ENCODE measurements at regions of chr16 and their contacts with region 1.

Region 1: GRCh38 chr16:48353565-48354163 is 31.5 kb downstream of the SIAH1 start:
- DNase-seq: peak; percentile 75
- ATAC-seq: peak; percentile 84
- H3K4me3 ChIP-seq: no peak overlapping the region
- H3K27ac ChIP-seq: no peak overlapping the region
- H3K4me1 ChIP-seq: no peaks in the 10 kb centered on the region
- H3K27me3 ChIP-seq: no peaks in the 10 kb centered on the region
- CTCF ChIP-seq: peak; percentile 97
- POLR2A ChIP-seq: no peak
- RAD21 ChIP-seq: peak; percentile 87

Region 2: DNA sequence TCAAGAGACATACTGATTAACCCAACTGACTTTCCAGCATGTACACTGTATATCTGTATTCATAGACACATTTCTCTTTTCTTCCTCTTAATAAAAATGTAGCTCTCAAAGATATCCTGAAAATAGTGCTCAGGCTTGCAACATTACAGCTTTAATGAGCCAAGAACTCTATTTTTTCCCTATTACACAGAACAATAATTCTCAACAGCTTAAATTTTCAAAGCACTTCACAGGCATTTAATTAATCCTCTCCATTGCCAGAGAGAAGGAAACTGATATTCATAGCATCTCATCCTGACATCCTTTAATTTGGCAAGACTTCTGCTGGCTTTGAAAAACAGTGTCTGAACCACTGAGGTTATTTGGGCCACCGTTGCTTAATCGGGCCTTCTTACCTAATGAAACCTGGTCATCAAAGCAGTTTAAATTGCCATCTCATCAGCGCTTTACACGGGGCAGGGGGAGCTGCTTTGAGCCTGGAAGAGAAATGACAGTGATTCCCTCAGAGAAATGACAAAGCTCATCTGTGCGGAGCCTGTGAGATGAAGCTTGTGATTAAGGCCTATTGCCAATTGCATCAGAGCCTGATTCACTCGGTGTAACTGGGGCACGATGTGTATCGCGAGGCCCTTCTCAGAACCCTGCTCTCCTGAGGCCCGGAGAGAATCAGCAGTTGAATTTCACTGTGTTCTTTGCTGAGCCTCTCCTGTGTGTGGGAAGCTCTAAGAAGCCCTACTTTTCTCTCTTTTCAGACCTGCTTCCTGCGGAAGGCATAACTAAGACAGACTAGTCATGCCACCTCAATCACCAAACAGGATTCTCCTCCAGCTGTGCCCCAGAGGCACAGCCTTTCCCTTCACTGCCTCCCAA is 40.1 kb after region 1 on chr16:
- CTCF ChIA-PET with region 1: no interaction called
- POLR2A ChIA-PET with region 1: no interaction called
- dilution Hi-C with region 1: no loop called
- in situ Hi-C with region 1: no loop called
- intact Hi-C with region 1: no loop called
- DNase-seq: peak; percentile 88
- ATAC-seq: peak; percentile 92
- H3K4me3 ChIP-seq: no peak overlapping the region
- H3K27ac ChIP-seq: peak overlapping the region; percentile 41; the same call in 1 of the 2 replicates
- H3K4me1 ChIP-seq: peaks cover 5% of the 10 kb centered on the region
- H3K27me3 ChIP-seq: no peaks in the 10 kb centered on the region
- CTCF ChIP-seq: no peak
- POLR2A ChIP-seq: no peak
- RAD21 ChIP-seq: no peak

Region 3: GRCh38 chr16:48542020-48542473 is 188.4 kb after region 1 on chr16:
- CTCF ChIA-PET with region 1: interaction called, 3 read pairs
- POLR2A ChIA-PET with region 1: no interaction called
- dilution Hi-C with region 1: no loop called
- in situ Hi-C with region 1: no loop called
- intact Hi-C with region 1: loop called (anchors 1 kb)
- DNase-seq: peak; percentile 54
- ATAC-seq: peak; percentile 79
- H3K4me3 ChIP-seq: no peak overlapping the region
- H3K27ac ChIP-seq: no peak overlapping the region
- H3K4me1 ChIP-seq: peaks cover 5% of the 10 kb centered on the region; the same call in 1 of the 2 replicates
- H3K27me3 ChIP-seq: no peaks in the 10 kb centered on the region
- CTCF ChIP-seq: peak; percentile 68
- POLR2A ChIP-seq: 0 out of 2 replicates have a peak, but pooled peaks have one; percentile 35
- RAD21 ChIP-seq: peak; percentile 89

Region 4: DNA sequence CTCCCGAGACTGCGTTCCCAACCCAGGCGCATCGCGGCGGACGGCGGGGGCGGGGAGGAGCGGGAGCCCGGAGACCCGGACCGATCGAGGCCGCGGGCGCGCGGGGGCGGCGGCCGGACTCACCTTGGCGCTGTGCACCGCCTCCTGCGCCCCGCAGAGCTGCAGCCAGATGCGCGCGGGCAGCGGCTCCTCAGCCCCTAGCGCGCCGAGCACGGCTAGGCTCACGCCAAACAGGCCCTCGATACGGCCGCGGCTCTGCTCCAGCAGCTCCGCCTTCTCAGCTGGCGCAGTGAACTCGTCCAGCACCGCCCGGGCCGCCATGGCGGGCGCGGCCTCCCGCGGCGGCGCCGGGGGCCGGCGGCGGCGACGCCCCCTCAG is 256.0 kb after region 1 on chr16:
- CTCF ChIA-PET with region 1: no interaction called
- POLR2A ChIA-PET with region 1: interaction called, 10 read pairs
- dilution Hi-C with region 1: no loop called
- in situ Hi-C with region 1: no loop called
- intact Hi-C with region 1: no loop called
- DNase-seq: peak; percentile 54
- ATAC-seq: peak; percentile 80
- H3K4me3 ChIP-seq: peak overlapping the region; percentile 98
- H3K27ac ChIP-seq: peak overlapping the region; percentile 77
- H3K4me1 ChIP-seq: peaks cover 22% of the 10 kb centered on the region
- H3K27me3 ChIP-seq: no peaks in the 10 kb centered on the region
- CTCF ChIP-seq: no peak
- POLR2A ChIP-seq: no peak
- RAD21 ChIP-seq: no peak

Region 5: DNA sequence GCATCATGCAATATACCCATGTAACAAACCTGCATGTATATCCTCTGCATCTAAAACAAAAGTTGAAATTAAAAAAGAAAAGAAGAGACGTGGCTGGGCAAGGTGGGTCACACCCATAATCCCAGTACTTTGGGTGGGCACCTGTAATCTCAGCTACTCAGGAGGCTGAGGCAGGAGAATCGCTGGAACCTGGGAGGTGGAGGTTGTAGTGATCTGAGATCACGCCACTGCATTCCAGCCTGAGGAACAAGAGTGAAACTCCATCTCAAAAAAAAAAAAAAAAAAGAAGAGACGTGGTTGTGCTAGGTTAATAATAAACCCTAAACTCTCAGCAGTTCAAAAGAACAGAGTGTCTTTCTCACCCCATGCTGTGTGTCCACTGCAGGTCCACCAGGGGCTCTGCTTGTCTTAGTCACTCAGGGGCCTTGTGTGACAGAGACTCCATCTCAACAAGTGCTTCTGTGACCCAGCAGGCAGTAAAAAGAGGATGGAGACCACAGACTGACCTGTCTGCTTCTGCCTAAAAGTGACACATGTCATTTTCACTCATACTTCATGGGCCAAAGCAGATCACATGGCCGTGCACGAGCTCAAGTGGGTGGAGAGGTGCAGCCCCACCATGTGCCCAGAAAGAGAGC is 278.6 kb after region 1 on chr16:
- CTCF ChIA-PET with region 1: interaction called, 4 read pairs
- POLR2A ChIA-PET with region 1: no interaction called
- dilution Hi-C with region 1: no loop called
- in situ Hi-C with region 1: loop called (anchors 5 kb)
- intact Hi-C with region 1: no loop called
- DNase-seq: no peak
- ATAC-seq: no peak
- H3K4me3 ChIP-seq: no peak overlapping the region
- H3K27ac ChIP-seq: no peak overlapping the region
- H3K4me1 ChIP-seq: peaks cover 2% of the 10 kb centered on the region; the same call in 1 of the 2 replicates
- H3K27me3 ChIP-seq: peaks cover 4% of the 10 kb centered on the region; the same call in 1 of the 2 replicates
- CTCF ChIP-seq: no peak
- POLR2A ChIP-seq: no peak
- RAD21 ChIP-seq: no peak

Measured in IMR-90 (cell line).